ENCODE measurements at regions of chr2 and their contacts with region 1.

Region 1: DNA sequence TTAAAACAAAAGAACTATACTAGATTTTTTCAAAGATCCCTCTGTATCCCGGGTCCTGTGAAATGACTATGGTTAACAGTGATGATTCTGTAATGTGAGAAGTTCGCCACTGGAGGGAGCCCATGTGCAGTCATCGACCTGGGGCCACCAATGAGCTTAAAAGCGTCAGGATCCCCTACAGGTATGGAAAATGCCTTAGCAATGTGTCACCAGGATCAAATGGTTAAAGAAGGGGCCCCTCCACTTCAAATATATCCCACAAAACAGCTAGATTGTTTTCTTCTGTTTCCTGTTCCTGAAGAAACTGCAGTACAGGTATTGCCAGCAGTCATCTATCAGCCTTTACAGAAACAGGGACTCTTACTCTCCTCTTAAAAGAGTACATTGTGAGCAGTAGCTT is 15.3 kb downstream of the CHRNA1 start:
- DNase-seq: peak; percentile 41
- ATAC-seq: peak; percentile 35
- H3K4me3 Mint-ChIP-seq: peak overlapping the region; percentile 47
- H3K27ac Mint-ChIP-seq: peak overlapping the region; percentile 44
- H3K4me1 Mint-ChIP-seq: peaks cover 47% of the 10 kb centered on the region
- H3K27me3 Mint-ChIP-seq: peaks cover 3% of the 10 kb centered on the region
- CTCF ChIP-seq: peak; percentile 67

Region 2: GRCh38 chr2:174603280-174603679 is 145.7 kb before region 1 on chr2:
- CTCF ChIA-PET with region 1: interaction called, 4 read pairs
- POLR2A ChIA-PET with region 1: no interaction called
- intact Hi-C with region 1: loop called (anchors 2 kb)
- DNase-seq: no peak
- ATAC-seq: peak; percentile 25
- H3K4me3 Mint-ChIP-seq: no peak overlapping the region
- H3K27ac Mint-ChIP-seq: peak overlapping the region; percentile 68
- H3K4me1 Mint-ChIP-seq: peaks cover 82% of the 10 kb centered on the region
- H3K27me3 Mint-ChIP-seq: no peaks in the 10 kb centered on the region
- CTCF ChIP-seq: no peak

Region 3: GRCh38 chr2:174771631-174772471 is 22.9 kb after region 1 on chr2:
- CTCF ChIA-PET with region 1: interaction called, 7 read pairs
- POLR2A ChIA-PET with region 1: no interaction called
- intact Hi-C with region 1: loop called (anchors 2 kb)
- DNase-seq: no peak
- ATAC-seq: no peak
- H3K4me3 Mint-ChIP-seq: no peak overlapping the region
- H3K27ac Mint-ChIP-seq: no peak overlapping the region
- H3K4me1 Mint-ChIP-seq: peaks cover 7% of the 10 kb centered on the region
- H3K27me3 Mint-ChIP-seq: peaks cover 15% of the 10 kb centered on the region
- CTCF ChIP-seq: no peak

Region 4: DNA sequence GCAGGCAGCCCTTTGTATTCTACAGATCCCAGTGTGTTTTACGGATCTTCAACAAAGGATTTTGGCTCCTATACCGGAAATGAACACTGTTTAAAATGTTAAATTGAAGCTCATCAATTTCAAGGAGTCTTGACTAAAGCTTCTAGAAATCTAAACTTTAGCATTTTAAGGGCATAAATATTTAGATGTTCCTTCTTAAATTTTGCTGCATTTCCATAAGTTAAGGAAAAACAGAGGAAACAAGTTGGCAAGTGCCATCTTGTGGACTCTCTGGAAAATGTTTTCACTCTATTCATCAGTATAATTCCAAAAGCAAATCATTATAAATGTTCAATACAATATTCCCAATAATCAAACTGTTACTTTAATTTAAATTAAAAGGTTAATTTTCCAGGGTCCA is 236.7 kb after region 1 on chr2:
- CTCF ChIA-PET with region 1: interaction called, 13 read pairs
- POLR2A ChIA-PET with region 1: interaction called, 4 read pairs
- intact Hi-C with region 1: loop called (anchors 1 kb)
- DNase-seq: no peak
- ATAC-seq: no peak
- H3K4me3 Mint-ChIP-seq: no peak overlapping the region
- H3K27ac Mint-ChIP-seq: no peak overlapping the region
- H3K4me1 Mint-ChIP-seq: peaks cover 2% of the 10 kb centered on the region
- H3K27me3 Mint-ChIP-seq: peaks cover 16% of the 10 kb centered on the region
- CTCF ChIP-seq: no peak

Region 5: GRCh38 chr2:175167792-175168563 is 419.0 kb after region 1 on chr2 and contains the start of gene ATF2:
- CTCF ChIA-PET with region 1: no interaction called
- POLR2A ChIA-PET with region 1: no interaction called
- intact Hi-C with region 1: loop called (anchors 5 kb)
- DNase-seq: peak; percentile 87
- ATAC-seq: peak; percentile 92
- H3K4me3 Mint-ChIP-seq: peak within 1 kb of the TSS; percentile 100
- H3K27ac Mint-ChIP-seq: peak within 1 kb of the TSS; percentile 99
- H3K4me1 Mint-ChIP-seq: peaks cover 43% of the 10 kb centered on the region
- H3K27me3 Mint-ChIP-seq: no peaks in the 10 kb centered on the region
- CTCF ChIP-seq: no peak
- total RNA-seq, gene ATF2: 49.0 and 59.9 TPM in 2 replicates

Region 6: DNA sequence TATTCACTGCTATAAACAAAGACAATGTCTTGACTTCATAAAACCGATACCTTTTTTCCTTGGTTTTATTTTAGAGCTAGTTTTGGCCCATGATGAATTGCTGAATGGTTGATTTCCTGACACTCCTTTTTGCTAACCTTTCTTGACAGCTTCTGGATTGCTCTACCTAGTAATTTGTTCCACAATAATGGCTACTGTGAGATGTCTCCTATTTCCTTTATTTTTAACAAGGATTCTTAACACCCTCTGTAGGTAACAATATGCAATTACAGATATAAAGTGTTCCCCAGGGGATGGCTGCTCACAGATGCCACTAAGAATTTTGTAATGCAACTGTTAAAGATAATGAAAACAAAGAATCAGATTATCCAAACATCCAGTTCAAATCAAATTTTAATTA is 533.3 kb after region 1 on chr2:
- CTCF ChIA-PET with region 1: interaction called, 3 read pairs
- POLR2A ChIA-PET with region 1: no interaction called
- intact Hi-C with region 1: loop called (anchors 1 kb)
- DNase-seq: no peak
- ATAC-seq: peak; percentile 45
- H3K4me3 Mint-ChIP-seq: no peak overlapping the region
- H3K27ac Mint-ChIP-seq: no peak overlapping the region
- H3K4me1 Mint-ChIP-seq: no peaks in the 10 kb centered on the region
- H3K27me3 Mint-ChIP-seq: peaks cover 3% of the 10 kb centered on the region
- CTCF ChIP-seq: no peak